Activated CD4-positive, alpha-beta memory T cell treated with anti-CD3 and anti-CD28 coated beads for 36 hours (primary cell): ENCODE measurements at regions of chr1 and their contacts with region 1.

Region 1: GRCh38 chr1:41954516-41954944 is 35.8 kb upstream of the HIVEP3 start:
- DNase-seq: no peak
- H3K4me3 Mint-ChIP-seq: no peak overlapping the region
- H3K27ac Mint-ChIP-seq: no peak overlapping the region
- H3K4me1 Mint-ChIP-seq: peaks cover 40% of the 10 kb centered on the region
- H3K27me3 Mint-ChIP-seq: no peaks in the 10 kb centered on the region

Region 2: DNA sequence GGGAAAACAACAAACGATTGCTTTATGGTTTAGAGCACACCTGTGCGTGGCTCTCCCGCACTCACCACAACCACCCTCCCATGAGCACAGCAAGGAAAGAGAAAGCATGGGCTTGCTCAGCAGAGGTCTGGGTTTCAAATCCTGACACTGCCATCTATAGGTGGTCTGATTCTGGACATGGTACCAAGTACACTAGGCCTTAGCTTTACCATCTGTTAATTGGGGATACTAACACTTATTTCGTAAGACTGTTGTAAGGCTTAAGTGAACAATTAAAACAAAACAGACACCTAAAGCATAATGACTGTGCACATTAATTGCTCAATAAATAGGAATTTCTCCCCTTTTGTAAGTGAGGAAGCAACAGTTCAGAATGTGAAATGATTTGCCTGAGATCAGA is 85.9 kb before region 1 on chr1:
- CTCF ChIA-PET with region 1: no interaction called
- POLR2A ChIA-PET with region 1: no interaction called
- intact Hi-C with region 1: no loop called
- DNase-seq: peak; percentile 60
- H3K4me3 Mint-ChIP-seq: no peak overlapping the region
- H3K27ac Mint-ChIP-seq: no peak overlapping the region
- H3K4me1 Mint-ChIP-seq: peaks cover 28% of the 10 kb centered on the region
- H3K27me3 Mint-ChIP-seq: no peaks in the 10 kb centered on the region

Region 3: GRCh38 chr1:41936118-41936517 is 18.4 kb before region 1 on chr1:
- CTCF ChIA-PET with region 1: interaction called, 3 read pairs
- POLR2A ChIA-PET with region 1: no interaction called
- intact Hi-C with region 1: loop called (anchors 2 kb)
- DNase-seq: peak; percentile 56
- H3K4me3 Mint-ChIP-seq: no peak overlapping the region
- H3K27ac Mint-ChIP-seq: peak overlapping the region; percentile 55
- H3K4me1 Mint-ChIP-seq: peaks cover 39% of the 10 kb centered on the region
- H3K27me3 Mint-ChIP-seq: no peaks in the 10 kb centered on the region

Region 4: DNA sequence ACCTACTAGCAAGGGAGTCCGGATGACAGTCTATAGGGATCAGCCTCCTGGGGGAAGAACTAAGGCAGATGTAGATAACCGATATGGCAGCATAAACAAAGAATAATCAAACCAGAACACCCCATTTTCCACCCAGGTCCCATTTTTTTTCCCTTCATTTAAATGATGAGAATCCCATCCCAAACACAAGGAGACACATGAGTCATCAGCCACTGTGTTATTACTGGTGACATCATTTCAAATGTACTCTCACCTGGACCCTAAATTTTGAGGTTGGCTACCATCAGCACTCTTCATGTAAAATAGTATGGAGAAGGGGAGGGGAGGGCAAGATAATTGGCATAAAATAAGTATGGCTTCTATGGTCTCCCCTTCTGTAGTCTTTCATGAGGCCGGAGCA is 89.8 kb after region 1 on chr1:
- CTCF ChIA-PET with region 1: no interaction called
- POLR2A ChIA-PET with region 1: no interaction called
- intact Hi-C with region 1: no loop called
- DNase-seq: no peak
- H3K4me3 Mint-ChIP-seq: no peak overlapping the region
- H3K27ac Mint-ChIP-seq: no peak overlapping the region
- H3K4me1 Mint-ChIP-seq: no peaks in the 10 kb centered on the region
- H3K27me3 Mint-ChIP-seq: peaks cover 8% of the 10 kb centered on the region